Astrocyte of the cerebellum (primary cell): ENCODE measurements at regions of chr11 and their contacts with region 1.

Region 1: GRCh38 chr11:64007629-64008282 is 21.5 kb downstream of the OTUB1 start:
- DNase-seq: no peak
- H3K4me3 ChIP-seq: peak overlapping the region; percentile 22
- CTCF ChIP-seq: peak; percentile 32

Region 2: GRCh38 chr11:64053699-64054098 is 45.9 kb after region 1 on chr11:
- in situ Hi-C with region 1: loop called (anchors 5 kb)
- DNase-seq: no peak
- H3K4me3 ChIP-seq: no peak overlapping the region
- CTCF ChIP-seq: no peak

Region 3: DNA sequence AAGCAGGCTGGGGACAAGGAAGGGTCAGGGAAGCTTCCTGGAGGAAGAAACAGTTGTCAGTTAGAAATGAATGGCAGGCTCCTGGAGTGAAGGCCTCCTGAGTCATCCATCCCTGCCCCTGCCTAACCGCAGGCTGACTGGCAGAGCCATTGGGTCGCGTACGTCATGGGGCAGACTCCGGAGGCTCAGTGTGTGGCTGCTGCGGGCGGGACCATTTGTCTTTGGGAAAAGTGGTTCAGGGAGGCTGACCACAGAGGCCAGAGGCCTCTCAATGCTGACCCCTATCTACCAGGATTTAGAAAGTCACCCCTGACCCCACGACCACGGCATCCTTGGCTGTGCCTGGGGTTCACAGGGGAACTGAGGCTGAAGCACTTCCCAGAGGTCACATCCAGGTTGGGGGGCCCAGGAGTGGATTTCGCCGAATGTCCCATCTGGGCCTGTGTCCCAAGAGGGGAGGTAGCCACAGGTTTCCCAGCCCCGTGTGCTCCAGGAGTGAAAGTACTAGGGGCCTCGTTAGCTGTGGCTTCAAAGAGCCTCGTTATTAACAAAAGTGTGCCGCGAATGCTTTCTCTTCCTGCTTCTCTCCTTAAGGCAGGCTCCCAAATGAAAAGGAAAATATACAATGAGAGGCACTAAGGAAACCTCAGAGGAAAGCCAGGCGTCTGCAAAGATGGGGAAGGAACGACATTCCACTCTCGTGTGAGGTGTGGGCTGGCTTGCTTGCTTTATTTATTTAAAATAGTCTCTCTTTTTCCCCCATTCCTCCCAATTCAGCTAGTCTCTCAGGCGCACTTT is 86.9 kb after region 1 on chr11:
- in situ Hi-C with region 1: loop called (anchors 5 kb)
- DNase-seq: peak; percentile 33
- H3K4me3 ChIP-seq: no peak overlapping the region
- CTCF ChIP-seq: no peak